Left ventricle myocardium superior (tissue), 1 donor: ENCODE measurements at regions of chr17 and their contacts with region 1.

Region 1: DNA sequence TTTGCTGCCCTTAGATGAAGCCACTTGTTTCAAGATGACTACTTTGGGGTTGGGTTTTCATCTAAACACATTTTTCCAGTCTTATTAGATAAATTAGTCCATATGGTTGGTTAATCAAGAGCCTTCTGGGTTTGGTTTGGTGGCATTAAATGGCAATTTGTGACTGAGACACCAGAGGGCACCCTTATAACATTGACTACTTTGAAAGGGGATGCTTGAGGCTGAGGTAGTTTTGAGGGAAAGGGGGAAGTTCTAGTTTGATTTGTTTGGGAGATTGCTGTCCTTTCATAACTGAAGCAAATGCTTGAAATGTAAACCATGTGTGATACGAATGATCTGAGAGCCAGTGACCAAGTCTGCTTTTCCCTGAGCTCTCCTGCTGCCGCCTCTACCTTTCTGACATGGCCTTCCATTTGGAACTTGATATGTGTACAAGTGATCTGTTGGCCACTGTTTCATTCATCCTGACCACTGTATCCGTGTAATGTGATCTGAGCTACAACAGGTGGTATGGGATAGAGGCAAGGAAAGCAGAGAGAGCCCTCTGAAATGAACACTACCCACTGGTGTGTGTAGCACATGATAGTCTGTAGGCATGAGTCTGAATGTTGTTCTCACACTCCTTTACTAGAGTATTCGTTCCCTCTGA is 5.8 kb upstream of the RARA start:
- DNase-seq: no peak
- ATAC-seq: peak; percentile 70

Region 2: GRCh38 chr17:40349920-40350909 is 47.1 kb after region 1 on chr17:
- intact Hi-C with region 1: loop called (anchors 5 kb)
- DNase-seq: peak; percentile 52
- ATAC-seq: no peak

Region 3: DNA sequence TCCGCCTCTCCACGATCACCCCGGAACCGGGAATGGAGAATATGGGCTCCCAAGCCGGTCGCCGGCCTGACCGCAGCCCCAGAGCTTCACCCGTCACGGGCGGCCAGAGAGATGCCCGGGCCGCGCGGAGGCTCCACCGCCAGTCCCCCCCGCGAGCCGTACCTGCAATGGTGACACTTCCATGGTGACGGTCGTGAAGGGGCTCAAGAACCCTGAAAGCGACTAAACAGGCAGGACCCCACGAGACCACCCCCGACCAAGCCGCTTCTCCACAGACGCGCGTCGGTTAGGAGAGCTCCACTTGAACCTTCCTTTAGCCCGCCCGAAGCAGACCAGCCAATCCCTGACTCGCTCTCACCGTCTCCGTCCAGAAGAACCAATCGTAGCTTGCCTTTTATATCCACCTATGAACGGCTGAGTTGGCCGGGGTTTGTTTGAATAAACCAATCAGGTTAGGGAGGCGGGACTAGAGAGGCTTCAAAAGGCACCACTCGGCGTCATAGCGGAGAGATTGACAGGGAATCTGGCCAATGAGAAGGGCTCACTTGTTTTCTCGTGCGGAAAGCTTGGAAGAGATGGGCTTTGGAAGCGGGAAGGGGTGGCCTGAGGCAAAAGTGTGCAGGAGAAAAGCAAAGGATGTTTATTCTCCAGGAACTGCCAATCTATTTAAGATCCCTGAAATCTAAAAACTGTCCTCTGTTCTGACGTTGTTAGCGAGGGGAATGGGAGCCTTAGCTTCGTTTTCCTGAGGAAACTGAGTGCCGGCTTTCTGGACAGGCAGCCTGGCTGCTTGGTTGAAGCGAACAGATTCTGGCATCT is 114.7 kb after region 1 on chr17 and contains the start of gene TOP2A:
- intact Hi-C with region 1: loop called (anchors 5 kb)
- DNase-seq: peak; percentile 84
- ATAC-seq: peak; percentile 100
- total RNA-seq, gene TOP2A: 1.1 TPM